Activated CD4-positive, alpha-beta memory T cell treated with anti-CD3 and anti-CD28 coated beads for 36 hours (primary cell): ENCODE measurements at regions of chrX and their contacts with region 1.

Region 1: DNA sequence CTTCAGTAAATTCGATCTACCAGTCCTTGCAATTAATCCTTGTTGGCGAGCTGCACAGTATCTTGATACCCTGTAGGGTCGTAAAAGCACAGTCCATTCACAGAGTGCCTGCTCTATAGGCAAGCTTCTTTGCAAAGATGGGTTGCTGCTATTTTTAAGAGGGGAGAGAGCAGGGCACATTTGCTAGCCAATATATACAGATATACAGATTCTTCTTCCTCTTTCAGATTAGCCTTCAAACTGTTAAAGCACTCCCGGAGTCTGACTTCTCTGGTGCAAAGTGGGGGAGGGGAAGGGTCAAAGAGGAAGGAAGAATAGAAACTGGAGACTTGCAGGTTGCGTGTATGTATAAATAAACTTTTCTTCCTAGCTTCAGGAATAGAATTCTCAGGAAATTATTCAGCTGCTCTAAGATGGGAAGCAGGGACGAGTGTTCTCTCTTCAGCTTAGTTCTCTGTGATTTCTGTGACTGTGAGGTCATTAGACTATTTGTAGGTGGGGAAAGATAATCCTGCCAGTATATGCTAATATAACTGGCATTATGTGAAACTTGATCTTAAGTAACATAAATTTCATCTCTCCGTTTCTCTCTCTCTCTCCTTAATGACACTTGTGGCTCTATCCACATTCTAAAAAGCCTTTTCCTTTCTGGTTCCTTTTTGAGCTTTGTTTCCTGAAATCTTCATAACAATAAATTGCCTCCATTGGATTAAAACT is at the start of gene CYSLTR1:
- DNase-seq: no peak
- H3K4me3 Mint-ChIP-seq: peak within 1 kb of the TSS; percentile 72
- H3K27ac Mint-ChIP-seq: peak within 1 kb of the TSS; percentile 64
- H3K4me1 Mint-ChIP-seq: peaks cover 57% of the 10 kb centered on the region
- H3K27me3 Mint-ChIP-seq: no peaks in the 10 kb centered on the region
- total RNA-seq, gene CYSLTR1: 1.8 to 2.5 TPM

Region 2: DNA sequence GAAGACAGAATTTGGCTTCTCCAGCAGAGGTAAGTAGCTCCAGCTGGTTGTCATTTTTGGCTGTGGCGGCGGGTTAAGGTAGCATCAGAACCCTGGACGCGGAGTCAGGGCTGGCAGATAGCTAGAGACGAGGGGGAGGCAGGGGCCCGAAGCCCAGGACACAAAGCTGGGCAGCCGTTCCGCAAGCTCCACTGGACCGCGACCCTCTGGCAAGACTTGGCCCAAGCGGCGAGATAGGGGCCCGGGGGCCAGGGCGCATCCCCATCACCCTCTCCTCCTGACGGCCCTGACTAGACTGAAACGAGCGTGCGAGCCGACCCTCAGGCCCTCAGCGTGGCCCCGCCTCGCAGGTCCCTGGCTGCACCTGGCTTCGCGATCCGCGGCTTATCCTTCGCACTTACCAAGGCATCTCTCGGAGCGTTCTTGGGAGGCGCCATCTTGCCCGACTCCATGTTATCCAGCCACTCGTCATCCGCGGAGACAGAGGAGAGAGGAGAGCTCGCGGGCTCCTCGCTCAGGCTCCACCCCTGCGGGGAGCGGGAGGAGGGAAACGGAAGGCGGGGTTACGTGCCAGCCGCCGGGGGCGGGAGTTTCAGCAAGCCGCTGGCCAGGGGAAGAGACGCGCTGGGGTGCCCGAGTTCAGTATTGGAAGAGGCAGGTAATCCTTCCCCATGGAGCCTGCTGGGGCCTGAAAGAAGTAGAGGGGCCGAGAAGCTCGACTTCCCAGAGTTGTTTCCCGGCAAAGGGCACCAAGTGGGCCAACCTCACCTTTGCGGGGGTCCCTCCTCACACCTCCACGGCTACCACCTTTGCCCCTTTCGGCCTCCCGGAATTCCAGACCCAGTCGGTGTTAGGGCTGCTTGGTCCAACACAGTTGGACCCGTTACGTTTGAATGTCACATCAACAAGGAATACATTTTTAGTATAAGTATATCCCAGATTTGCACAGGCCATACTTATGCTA is 188.1 kb before region 1 on chrX and contains the start of gene TAF9B:
- CTCF ChIA-PET with region 1: no interaction called
- POLR2A ChIA-PET with region 1: no interaction called
- intact Hi-C with region 1: loop called (anchors 5 kb)
- DNase-seq: peak; percentile 90
- H3K4me3 Mint-ChIP-seq: peak within 1 kb of the TSS; percentile 88
- H3K27ac Mint-ChIP-seq: peak within 1 kb of the TSS; percentile 87
- H3K4me1 Mint-ChIP-seq: peaks cover 16% of the 10 kb centered on the region
- H3K27me3 Mint-ChIP-seq: no peaks in the 10 kb centered on the region
- total RNA-seq, gene TAF9B: 23.0 TPM

Region 3: GRCh38 chrX:78754917-78755316 is 427.4 kb after region 1 on chrX:
- CTCF ChIA-PET with region 1: no interaction called
- POLR2A ChIA-PET with region 1: no interaction called
- intact Hi-C with region 1: no loop called
- DNase-seq: no peak
- H3K4me3 Mint-ChIP-seq: no peak overlapping the region
- H3K27ac Mint-ChIP-seq: no peak overlapping the region
- H3K4me1 Mint-ChIP-seq: no peaks in the 10 kb centered on the region
- H3K27me3 Mint-ChIP-seq: no peaks in the 10 kb centered on the region